ENCODE measurements at regions of chr9 and their contacts with region 1.

Region 1: DNA sequence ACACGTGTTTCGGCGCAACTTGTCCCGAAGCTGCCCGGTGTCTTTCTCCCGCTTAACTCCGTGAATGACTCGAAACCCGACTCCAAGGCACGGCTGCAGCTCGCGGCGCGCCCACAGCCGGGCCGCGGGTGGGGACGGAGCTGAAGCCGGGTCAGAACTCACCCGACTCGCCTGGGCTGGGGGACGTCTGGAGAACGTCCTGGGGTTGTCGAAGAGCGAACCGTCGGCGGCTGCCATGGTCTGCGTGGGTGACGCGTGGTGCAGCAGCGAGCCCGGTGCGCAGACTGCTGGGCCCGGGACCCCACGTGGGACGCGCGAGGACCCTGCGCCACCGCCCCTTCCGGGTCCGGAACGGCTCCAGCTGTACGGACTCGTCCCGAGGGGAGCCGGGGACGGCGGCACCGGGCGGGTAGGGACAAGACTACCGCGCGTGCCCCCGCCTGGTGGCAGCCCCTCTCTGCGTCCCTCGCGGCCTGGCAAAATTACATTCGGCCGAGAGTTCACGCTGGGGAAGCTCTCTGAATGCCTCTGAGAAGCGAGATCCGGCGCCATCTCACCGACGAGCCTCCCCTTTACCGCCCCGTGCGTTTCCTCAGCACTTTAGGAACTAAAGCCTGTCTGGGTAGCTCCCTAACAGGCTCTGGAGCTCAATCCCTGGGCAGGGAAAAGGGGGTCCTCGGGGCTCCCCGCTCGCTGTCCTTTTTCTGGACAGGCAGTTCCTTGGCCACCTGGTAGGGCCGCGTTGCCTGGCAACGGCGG is at the start of gene DDX31:
- DNase-seq: peak; percentile 96
- H3K4me3 Mint-ChIP-seq: peak within 1 kb of the TSS; percentile 96
- H3K27ac Mint-ChIP-seq: peak within 1 kb of the TSS; percentile 93
- H3K4me1 Mint-ChIP-seq: peaks cover 39% of the 10 kb centered on the region
- H3K27me3 Mint-ChIP-seq: no peaks in the 10 kb centered on the region
- total RNA-seq, gene DDX31: 28.2 and 31.8 TPM in 2 replicates

Region 2: DNA sequence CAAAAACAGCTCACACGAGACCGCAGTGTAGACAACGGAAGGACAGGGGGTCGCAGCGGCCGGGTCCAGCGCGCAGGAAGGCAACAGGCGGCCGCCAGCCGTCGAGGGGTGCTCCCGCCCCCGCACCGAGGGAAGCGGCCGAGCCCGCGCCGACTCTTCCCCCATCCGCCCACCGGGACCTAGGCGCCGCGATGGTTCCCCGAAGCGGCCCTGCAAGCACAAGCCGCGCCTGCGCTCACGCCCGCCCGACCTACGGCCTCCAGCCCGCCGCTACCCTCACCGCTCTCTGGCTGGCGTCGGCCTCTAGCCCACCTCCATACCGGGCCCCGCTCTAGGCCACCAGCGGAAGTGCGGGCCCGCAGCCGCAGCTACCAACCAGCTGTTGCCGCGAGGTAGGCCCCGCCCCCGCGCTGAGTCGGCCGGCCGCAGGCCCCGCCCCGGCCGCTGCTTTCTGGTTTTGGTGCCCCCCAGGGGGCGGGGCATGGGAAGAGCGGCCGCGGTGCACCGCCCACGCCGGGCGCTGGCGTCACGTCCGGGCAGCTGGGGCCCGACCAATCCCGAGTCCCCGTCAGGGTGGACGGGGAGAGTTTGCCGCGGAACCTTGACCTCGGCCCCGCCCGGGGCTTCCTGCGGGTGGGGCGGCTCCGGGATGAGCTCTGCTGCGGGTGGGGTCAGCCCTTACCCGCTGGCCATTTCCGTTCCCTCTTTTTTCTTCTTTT is 315.1 kb before region 1 on chr9 and contains the start of gene SETX:
- intact Hi-C with region 1: loop called (anchors 5 kb)
- DNase-seq: peak; percentile 97
- H3K4me3 Mint-ChIP-seq: peak within 1 kb of the TSS; percentile 74
- H3K27ac Mint-ChIP-seq: peak within 1 kb of the TSS; percentile 98
- H3K4me1 Mint-ChIP-seq: peaks cover 36% of the 10 kb centered on the region
- H3K27me3 Mint-ChIP-seq: peaks cover 2% of the 10 kb centered on the region
- total RNA-seq, gene SETX: 45.8 and 46.0 TPM in 2 replicates

Region 3: DNA sequence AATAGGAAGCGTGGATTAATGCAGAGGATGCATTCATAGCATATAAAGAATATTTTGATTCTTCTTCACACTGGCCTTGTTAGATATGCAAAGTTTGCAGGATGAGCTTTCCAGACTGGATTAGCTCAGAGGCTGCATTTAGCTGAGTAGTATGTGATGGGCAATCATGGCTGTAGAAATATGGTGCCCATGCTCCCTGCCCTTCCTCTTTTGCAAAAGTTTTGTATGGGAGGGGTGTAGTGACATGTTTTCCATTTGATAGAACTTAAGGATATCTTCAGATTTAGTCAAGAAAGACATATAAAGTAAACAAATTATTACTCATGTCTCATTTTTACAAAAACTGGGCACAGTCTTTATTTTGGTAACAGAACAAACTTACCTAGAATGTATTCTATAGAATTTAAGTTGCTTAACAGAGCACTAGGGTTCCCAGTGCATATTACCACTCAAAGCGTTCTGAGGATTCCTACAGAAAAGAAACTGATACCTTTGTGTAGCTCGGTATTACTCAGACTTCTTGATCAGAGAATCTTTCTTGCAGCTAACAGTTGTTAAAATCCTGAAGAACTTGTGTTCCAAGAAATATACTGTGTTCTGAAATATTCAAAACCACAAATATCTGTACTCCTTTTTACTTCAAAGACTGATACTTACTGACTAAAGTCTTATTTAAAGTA is 10.2 kb after region 1 on chr9:
- intact Hi-C with region 1: loop called (anchors 1 kb)
- DNase-seq: no peak
- H3K4me3 Mint-ChIP-seq: peak overlapping the region; percentile 73
- H3K27ac Mint-ChIP-seq: peak overlapping the region; percentile 85
- H3K4me1 Mint-ChIP-seq: peaks cover 38% of the 10 kb centered on the region
- H3K27me3 Mint-ChIP-seq: no peaks in the 10 kb centered on the region

Region 4: DNA sequence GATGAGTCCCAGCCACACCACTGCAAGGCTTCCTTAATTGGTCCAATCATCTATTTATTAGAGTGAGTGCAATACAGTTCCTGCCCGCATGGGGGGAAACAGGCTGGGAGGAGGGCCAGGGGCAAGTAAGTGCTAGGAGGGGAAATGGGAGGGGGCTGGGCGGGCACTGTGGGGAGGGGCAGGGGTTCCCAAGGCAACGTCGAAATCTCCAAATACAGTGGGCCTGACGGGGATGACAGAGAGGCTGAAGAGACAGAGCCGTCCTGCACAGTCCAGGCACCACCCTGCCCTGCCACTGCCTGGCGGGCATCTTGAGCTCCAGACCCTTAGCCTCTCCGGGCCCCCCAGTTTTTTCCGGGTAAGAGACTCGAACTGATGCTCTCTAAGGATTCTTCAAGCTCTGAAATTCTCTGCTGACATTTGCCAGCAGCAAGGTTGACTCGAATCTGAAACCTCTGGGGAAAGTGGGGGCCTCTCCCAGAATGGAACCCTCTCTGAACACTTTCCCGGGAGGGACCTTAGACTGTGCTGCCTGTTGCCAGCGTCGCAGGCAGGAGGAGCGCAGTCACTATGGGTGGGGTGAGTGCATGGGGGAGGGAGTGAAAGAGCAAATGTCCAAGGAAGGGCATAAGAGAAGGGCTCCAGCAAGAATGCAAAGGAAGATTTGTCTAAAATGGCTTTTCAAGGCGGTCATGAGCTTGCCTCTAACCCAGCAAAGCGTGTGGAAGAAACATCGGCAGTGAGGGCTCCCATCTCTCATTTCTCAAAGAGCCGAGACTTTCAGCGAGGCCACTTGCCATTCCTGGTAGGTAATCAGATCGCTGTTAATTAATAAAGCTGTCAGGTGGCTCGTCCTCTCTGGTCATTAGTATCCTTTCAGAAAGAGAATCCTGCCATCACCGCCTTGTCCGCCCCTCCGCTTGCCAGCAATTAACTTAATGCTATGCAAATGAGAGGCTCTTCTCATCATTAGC is 99.3 kb after region 1 on chr9:
- intact Hi-C with region 1: loop called (anchors 2 kb)
- DNase-seq: peak; percentile 88
- H3K4me3 Mint-ChIP-seq: peak overlapping the region; percentile 98
- H3K27ac Mint-ChIP-seq: peak overlapping the region; percentile 99
- H3K4me1 Mint-ChIP-seq: peaks cover 24% of the 10 kb centered on the region
- H3K27me3 Mint-ChIP-seq: peaks cover 22% of the 10 kb centered on the region

Region 5: GRCh38 chr9:132877824-132878694 is 208.2 kb after region 1 on chr9 and contains the start of gene AK8:
- intact Hi-C with region 1: loop called (anchors 5 kb)
- DNase-seq: peak; percentile 95
- H3K4me3 Mint-ChIP-seq: peak within 1 kb of the TSS; percentile 81
- H3K27ac Mint-ChIP-seq: peak within 1 kb of the TSS; percentile 66
- H3K4me1 Mint-ChIP-seq: peaks cover 28% of the 10 kb centered on the region
- H3K27me3 Mint-ChIP-seq: peaks cover 5% of the 10 kb centered on the region
- total RNA-seq, gene AK8: 0.33 TPM in 1 of 2 replicates, not detected in the other

Measured in activated CD4-positive, alpha-beta T cell treated with anti-CD3 and anti-CD28 coated beads, Interleukin-2, amount 10 ng/mL, durations not matched to agents 24 days and 14 days (primary cell).